ENCODE measurements at regions of chr5 and their contacts with region 1.

Region 1: DNA sequence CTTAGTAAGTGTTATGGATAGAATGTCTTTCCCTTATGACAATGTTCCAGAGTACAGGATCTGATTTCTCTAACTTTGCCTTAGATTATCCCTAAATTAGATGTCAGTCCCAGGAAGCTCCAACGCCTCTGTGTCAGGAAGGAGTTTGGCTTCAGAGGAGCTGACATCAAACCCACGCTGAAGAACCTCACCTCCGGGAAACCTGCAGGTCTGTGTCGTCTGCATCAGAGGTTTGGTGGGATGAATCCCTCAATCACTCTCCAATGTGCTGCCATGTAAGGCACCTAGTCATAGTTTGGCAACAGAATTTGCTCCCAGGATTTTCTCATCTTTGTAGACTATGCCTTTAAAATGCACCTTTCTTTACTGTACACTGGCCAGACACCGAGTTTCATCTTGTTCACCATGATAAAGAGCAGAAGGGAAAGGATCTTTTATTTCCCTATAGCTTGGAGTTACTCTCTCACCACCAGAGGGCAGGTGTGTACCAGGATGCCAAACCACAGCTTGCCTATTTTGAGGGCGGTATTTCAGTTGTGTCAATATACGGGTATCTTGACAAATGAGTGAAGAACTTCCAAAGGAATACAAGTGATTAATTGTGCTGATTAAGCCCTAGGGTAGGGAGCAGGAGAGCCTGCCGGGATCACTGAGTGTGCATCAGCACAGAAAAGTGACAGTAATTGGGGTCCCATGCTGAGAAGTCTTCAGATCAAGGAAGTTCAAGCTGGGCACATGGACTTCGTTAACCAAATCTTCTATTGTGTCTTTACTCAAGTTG is 23.4 kb downstream of the MINAR2 start:
- DNase-seq: peak; percentile 53

Region 2: DNA sequence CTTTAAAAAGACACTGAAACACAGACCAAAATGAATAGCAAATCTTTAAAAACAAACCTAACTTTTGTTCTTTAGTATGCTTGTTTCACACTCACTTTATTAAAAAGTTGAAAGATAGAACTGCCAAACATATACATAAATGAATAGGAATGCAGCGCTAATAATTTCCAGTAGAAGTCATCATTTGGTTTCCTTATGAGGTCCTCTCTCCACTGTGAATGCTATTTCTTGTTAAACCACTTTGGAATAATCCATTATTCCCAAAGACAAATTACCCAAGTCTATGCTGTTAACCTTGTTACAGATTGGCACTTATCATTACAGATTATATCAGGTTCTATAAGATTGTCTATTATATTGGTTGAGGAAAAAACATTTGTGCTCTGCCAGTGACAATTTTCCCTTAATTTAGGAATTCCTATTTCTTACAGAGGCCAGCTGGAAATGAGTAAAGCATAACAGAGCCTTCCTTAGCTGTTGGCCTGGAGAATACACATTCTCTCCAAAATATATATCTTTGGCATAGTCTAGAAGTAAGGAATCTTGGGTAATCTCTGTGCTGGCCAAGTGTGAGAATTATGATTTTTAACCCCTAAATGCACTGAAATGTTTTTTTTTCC is 52.7 kb before region 1 on chr5:
- CTCF ChIA-PET with region 1: no interaction called
- POLR2A ChIA-PET with region 1: no interaction called
- DNase-seq: no peak

Region 3: DNA sequence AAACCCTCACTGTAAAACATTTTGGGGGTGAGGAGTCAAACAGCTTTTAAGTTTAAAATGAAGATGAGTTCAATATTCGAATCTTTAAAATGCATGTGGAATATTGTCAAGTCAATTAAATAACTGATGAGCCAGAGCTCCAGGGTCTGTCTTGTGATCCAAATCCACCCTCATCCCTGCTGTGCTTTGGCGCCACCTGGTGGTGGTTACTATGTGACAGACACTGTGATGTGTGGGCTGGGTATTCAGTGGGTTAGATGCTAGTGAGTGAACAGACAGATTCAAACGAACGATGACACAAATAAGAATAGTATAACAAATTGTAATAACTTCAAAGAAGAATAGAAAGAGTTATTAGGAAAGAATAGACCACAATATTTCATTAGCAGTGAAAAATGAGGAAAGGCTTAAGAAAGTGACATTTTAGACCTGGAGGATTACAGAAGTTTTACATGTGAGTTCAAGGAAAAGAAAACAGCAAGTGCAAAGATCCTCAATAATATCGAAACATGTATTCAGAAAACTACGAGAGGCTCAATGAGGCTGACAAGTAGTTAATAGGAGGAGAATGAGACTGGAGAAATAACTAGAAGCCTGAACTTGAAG is 81.6 kb after region 1 on chr5:
- CTCF ChIA-PET with region 1: interaction called, 79 read pairs
- POLR2A ChIA-PET with region 1: no interaction called
- DNase-seq: peak; percentile 70

Region 4: GRCh38 chr5:129904102-129904666 is 132.9 kb after region 1 on chr5 and contains the start of gene CHSY3:
- CTCF ChIA-PET with region 1: no interaction called
- POLR2A ChIA-PET with region 1: no interaction called
- DNase-seq: peak; percentile 70

Region 5: GRCh38 chr5:130141659-130142320 is 370.5 kb after region 1 on chr5:
- CTCF ChIA-PET with region 1: interaction called, 10 read pairs
- POLR2A ChIA-PET with region 1: no interaction called
- DNase-seq: peak; percentile 20